ENCODE measurements at regions of chr2 and their contacts with region 1.

Region 1: DNA sequence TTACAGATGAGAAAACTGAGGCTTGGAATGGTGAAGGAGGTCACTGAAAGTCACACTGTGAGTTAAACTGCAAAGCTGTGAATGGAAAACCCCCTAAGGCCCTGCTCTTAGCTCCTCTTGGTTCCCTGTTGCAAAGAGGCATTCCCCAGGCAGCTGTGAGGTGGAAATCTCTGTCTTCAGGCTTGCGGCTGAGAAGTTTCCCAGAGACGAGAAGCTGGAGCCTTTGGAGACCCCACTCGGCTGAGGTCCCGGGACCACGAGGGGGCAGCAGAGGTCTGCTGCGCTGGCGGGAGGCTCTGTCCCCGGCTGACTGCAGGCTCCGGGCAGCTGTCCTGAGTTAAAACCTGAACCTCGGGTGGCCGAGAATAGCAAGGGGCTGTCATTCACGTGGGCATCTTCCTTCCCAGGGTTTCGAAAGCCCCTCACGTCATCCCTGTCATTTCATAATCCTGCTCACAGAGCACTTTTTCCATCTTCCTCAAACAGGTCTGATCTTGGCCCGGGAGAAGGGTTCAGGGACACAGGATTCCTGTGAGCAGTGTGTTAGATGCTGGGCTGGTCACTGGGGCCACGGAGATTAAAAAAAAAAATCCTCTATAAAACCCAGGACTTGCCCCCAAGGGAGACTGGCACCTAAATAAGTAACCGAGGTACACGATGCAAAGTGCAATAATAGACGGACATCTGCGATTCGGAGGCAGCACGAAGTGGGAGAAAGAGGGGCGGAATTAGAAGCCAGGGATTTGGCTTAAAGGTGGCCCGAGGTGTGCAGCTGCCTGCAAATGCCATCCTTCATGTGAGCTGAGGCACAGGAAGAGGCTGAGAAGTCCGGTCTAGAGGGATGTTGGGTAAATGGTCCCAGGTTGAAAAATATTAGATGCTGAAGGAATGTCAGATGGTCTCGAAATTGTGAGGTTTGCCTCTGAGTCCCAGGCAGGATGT is 24.6 kb upstream of the ATOH8 start:
- DNase-seq: peak; percentile 91
- H3K4me3 ChIP-seq: no peak overlapping the region
- H3K27ac ChIP-seq: peak overlapping the region in 1 of 2 donors; percentile 21
- H3K4me1 ChIP-seq: peaks cover 3% of the 10 kb centered on the region
- H3K27me3 ChIP-seq: no peaks in the 10 kb centered on the region
- CTCF ChIP-seq: peak; percentile 84 to 95 (median 87)
- POLR2A ChIP-seq: no peak

Region 2: DNA sequence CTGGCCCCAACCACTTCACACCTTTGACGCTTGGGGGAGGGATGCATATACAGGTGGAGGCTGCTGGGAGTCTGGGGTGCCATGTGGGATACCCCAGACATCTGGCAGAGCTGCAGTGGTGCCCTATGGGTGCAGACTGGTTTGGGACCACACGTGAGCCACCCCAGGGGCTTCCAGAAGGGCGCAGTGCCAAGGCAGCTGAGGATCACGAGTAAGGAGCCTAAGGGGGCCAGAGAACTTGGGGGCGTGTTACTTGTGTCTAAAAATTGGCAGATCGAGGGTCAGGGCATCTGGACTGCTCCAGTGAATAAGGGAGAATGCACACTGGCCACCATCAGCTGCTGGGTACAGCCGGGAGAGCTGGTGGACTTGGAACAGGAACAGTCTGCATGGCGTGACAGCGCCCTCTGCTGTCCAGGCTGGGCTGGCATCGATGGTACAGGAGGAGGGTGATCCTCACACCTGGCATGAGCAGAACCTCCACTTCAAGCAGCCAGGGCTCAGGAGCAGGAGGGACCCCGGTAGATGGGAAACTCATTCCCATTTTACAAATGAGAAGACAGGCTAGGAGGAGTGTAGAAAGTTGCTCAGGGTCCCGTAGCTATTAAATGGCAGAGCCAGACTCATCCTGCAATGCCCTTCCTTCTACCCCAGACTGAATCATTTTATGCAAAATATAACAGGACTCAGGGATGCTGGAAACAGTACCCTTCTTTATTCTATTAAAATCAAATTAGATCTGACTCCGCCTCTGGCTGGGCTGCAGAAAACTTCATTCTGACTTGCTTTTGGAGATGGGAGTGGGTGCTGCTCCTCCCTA is 85.0 kb after region 1 on chr2:
- intact Hi-C with region 1: loop called (anchors 5 kb)
- DNase-seq: peak; percentile 95
- H3K4me3 ChIP-seq: no peak overlapping the region
- H3K27ac ChIP-seq: no peak overlapping the region
- H3K4me1 ChIP-seq: peaks cover 4% of the 10 kb centered on the region
- H3K27me3 ChIP-seq: no peaks in the 10 kb centered on the region
- CTCF ChIP-seq: peak; percentile 89 to 95 (median 93)
- POLR2A ChIP-seq: no peak